ENCODE measurements at regions of chr5 and their contacts with region 1.

Region 1: DNA sequence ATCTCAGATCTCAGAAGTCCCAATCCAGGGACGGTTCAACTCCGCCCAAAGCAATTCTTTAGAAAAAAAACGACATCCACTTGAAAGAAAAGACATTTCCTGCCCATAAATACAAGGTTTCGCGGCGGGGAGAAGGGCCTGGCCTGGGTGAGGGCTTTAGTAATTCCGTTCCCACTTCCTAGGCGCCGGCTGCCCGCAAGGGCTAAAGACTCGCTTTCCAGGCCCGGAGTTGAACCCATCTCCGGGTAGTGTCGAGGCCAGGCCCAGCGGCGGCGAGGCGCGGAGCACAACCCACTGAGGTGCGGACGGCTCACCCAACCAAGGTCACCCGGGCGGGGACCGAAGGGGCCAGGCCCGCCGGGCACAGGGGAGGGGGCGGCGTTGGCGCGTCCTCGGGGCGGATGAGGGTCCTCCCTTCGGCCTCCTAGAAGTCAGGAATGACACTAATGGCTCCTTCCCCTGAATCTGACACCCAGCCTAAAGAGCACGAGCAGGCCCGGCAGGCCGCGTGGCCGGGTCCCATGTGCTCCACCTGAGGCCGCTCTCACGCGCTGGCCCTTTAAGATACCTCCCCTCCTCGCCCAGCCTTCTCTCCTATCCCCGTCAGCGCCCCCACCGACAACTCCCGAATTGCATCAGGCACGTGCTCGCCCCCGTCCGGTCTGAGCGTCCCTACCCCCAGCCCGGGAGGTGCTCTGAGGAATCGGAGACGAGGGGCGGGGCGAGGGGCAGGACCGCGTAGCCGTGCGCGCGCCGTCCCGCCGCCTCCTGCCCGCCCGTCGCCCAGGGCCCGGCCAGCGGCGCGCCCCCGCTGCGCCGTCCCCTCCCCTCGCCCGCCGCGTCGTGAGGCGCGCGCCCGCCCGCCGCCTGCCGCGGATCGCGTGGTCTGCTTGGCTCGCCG is 467 bp upstream of the LARP1 start:
- DNase-seq: peak; percentile 99
- ATAC-seq: peak; percentile 89
- H3K4me3 ChIP-seq: peak overlapping the region in 4 of 5 experiments; percentile 69 to 96 (median 85)
- H3K4me3 Mint-ChIP-seq: peak overlapping the region; percentile 90
- H3K27ac ChIP-seq: peak overlapping the region; percentile 80 to 97
- H3K27ac Mint-ChIP-seq: peak overlapping the region; percentile 91
- H3K4me1 ChIP-seq: peaks cover 28 to 29% of the 10 kb centered on the region in 2 donors
- H3K4me1 Mint-ChIP-seq: peaks cover 43% of the 10 kb centered on the region
- H3K27me3 ChIP-seq: no peaks in the 10 kb centered on the region
- H3K27me3 Mint-ChIP-seq: no peaks in the 10 kb centered on the region
- CTCF ChIP-seq: peak; percentile 45

Region 2: DNA sequence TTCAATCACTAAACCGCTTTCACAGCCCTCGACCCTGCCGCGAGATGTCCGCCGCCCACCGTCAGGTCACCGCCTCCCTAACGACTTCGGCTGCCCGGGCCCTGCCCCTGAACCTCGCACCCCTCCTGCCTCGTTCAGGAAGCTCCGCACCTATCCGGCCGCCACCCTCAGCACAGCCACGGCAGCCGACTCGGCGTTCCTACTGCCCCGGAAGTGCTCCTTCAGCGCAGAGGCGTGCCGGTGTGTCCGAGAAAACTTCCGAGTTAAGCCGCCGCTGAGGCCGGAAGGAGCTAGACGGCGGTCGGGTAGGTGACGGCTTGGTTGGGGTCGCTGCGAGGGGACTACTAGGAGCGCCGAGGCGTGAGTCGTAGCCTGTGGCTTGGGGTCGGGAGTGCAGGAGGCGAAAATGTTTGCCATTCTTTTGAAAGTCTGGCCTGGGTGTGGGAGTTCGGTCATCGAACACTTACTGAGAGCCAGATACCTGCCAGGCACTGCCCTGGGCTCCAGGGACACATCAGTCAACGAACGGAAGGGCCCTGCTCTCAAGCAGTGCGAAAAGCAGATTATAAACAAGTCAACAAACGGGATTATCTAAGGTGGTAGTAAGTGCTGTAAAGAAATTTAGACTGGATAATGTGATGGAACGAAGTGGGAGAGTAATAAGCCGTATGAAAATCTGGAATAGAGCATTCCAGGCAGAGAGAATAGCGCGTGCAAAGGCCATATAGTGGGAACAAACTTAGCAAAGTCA is 715.8 kb before region 1 on chr5 and contains the starts of genes FAM114A2 and MFAP3:
- CTCF ChIA-PET with region 1: no interaction called
- POLR2A ChIA-PET with region 1: no interaction called
- intact Hi-C with region 1: loop called (anchors 5 kb)
- DNase-seq: peak; percentile 90
- ATAC-seq: peak; percentile 98
- H3K4me3 ChIP-seq: peak within 1 kb of the TSS; percentile 77 to 94 (median 86)
- H3K4me3 Mint-ChIP-seq: peak within 1 kb of the TSS; percentile 99
- H3K27ac ChIP-seq: peak within 1 kb of the TSS; percentile 88 to 90
- H3K27ac Mint-ChIP-seq: peak within 1 kb of the TSS; percentile 99
- H3K4me1 ChIP-seq: peaks cover 13 to 16% of the 10 kb centered on the region in 2 donors
- H3K4me1 Mint-ChIP-seq: peaks cover 46% of the 10 kb centered on the region
- H3K27me3 ChIP-seq: no peaks in the 10 kb centered on the region
- H3K27me3 Mint-ChIP-seq: no peaks in the 10 kb centered on the region
- CTCF ChIP-seq: no peak
- total RNA-seq, gene FAM114A2: 34.2 and 36.2 TPM in 2 replicates
- total RNA-seq, gene MFAP3: 22.9 and 27.1 TPM in 2 replicates

Region 3: GRCh38 chr5:154534457-154535050 is 220.2 kb before region 1 on chr5:
- CTCF ChIA-PET with region 1: no interaction called
- POLR2A ChIA-PET with region 1: no interaction called
- intact Hi-C with region 1: no loop called
- DNase-seq: no peak
- ATAC-seq: no peak
- H3K4me3 ChIP-seq: no peak overlapping the region
- H3K4me3 Mint-ChIP-seq: no peak overlapping the region
- H3K27ac ChIP-seq: no peak overlapping the region
- H3K27ac Mint-ChIP-seq: no peak overlapping the region
- H3K4me1 ChIP-seq: no peaks in the 10 kb centered on the region
- H3K4me1 Mint-ChIP-seq: no peaks in the 10 kb centered on the region
- H3K27me3 ChIP-seq: peaks cover 0 to 9% (median 0%) of the 10 kb centered on the region in 4 experiments
- H3K27me3 Mint-ChIP-seq: peaks cover 35% of the 10 kb centered on the region
- CTCF ChIP-seq: no peak

Region 4: DNA sequence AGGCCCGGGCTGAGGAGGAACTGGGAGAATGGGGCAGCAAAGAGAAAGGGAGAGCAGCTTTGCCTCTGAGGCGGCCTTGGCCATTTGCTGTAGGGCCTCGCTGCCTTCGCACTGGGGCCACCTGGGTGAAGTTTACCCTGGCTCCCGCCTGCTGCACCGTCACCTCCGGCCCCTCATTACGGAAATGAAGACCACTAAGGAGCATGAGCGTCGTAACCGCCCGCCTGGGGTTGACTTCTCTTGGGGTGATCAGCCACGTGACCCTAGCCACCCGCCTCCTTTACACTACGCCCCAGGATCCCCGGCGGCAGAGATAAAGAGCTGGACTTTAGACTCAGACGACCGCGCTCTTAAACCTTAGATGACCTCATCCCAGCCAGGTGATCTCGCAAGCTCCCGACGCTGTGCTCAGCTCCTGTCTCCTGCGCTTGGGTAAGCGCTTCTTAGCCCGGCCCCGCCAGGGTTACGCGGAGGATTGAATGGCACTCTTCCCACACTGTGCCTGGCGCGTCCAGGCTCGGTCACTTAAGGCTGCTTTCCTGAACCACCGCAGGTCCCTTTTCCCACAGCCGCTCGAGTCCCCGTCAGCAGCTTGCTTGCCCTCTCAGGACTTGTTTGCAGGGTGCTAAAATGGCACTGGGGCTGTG is 107.5 kb before region 1 on chr5:
- CTCF ChIA-PET with region 1: interaction called, 4 read pairs
- POLR2A ChIA-PET with region 1: no interaction called
- intact Hi-C with region 1: loop called (anchors 2 kb)
- DNase-seq: peak; percentile 53
- ATAC-seq: peak; percentile 61
- H3K4me3 ChIP-seq: peak overlapping the region in 4 of 5 experiments; percentile 37 to 74 (median 57)
- H3K4me3 Mint-ChIP-seq: peak overlapping the region; percentile 93
- H3K27ac ChIP-seq: no peak overlapping the region
- H3K27ac Mint-ChIP-seq: peak overlapping the region; percentile 77
- H3K4me1 ChIP-seq: peaks cover 14 to 15% of the 10 kb centered on the region in 2 donors
- H3K4me1 Mint-ChIP-seq: peaks cover 15% of the 10 kb centered on the region
- H3K27me3 ChIP-seq: peaks cover 0 to 16% (median 2%) of the 10 kb centered on the region in 4 experiments
- H3K27me3 Mint-ChIP-seq: peaks cover 22% of the 10 kb centered on the region
- CTCF ChIP-seq: no peak

Region 5: DNA sequence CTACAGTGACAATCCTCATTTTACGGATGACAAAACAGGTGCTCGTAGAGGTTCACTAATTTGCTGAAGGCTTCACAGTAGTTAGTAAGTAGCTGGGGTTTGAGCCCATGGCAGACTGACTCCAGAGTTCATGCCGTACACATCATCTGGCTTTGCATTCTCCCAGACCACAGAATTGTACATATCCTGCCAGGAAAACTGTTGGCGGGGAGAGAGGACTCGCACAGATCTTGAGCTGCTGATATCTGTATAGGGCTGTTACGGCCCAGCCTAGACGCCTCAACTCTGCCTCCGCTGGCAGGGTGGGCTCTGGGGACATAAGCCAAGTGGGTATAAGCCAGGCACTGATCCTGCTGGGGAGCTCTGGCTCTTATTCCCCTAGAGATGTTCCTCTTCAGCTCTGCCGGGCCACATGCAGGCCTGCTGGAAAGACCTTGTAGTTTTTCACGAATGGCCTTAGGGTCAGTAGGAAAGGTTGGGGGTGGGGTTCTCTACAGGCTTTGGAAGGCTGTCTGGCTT is 16.7 kb after region 1 on chr5:
- CTCF ChIA-PET with region 1: interaction called, 4 read pairs
- POLR2A ChIA-PET with region 1: no interaction called
- intact Hi-C with region 1: loop called (anchors 2 kb)
- DNase-seq: no peak
- ATAC-seq: no peak
- H3K4me3 ChIP-seq: no peak overlapping the region
- H3K4me3 Mint-ChIP-seq: peak overlapping the region; percentile 60
- H3K27ac ChIP-seq: peak overlapping the region in 1 of 2 donors; percentile 90
- H3K27ac Mint-ChIP-seq: peak overlapping the region; percentile 82
- H3K4me1 ChIP-seq: peaks cover 69 to 71% of the 10 kb centered on the region in 2 donors
- H3K4me1 Mint-ChIP-seq: peaks cover 82% of the 10 kb centered on the region
- H3K27me3 ChIP-seq: no peaks in the 10 kb centered on the region
- H3K27me3 Mint-ChIP-seq: no peaks in the 10 kb centered on the region
- CTCF ChIP-seq: no peak

Region 6: GRCh38 chr5:154885439-154885838 is 130.7 kb after region 1 on chr5:
- CTCF ChIA-PET with region 1: no interaction called
- POLR2A ChIA-PET with region 1: no interaction called
- intact Hi-C with region 1: no loop called
- DNase-seq: no peak
- ATAC-seq: no peak
- H3K4me3 ChIP-seq: no peak overlapping the region
- H3K4me3 Mint-ChIP-seq: no peak overlapping the region
- H3K27ac ChIP-seq: no peak overlapping the region
- H3K27ac Mint-ChIP-seq: no peak overlapping the region
- H3K4me1 ChIP-seq: no peaks in the 10 kb centered on the region
- H3K4me1 Mint-ChIP-seq: no peaks in the 10 kb centered on the region
- H3K27me3 ChIP-seq: no peaks in the 10 kb centered on the region
- H3K27me3 Mint-ChIP-seq: no peaks in the 10 kb centered on the region
- CTCF ChIP-seq: no peak

Region 7: DNA sequence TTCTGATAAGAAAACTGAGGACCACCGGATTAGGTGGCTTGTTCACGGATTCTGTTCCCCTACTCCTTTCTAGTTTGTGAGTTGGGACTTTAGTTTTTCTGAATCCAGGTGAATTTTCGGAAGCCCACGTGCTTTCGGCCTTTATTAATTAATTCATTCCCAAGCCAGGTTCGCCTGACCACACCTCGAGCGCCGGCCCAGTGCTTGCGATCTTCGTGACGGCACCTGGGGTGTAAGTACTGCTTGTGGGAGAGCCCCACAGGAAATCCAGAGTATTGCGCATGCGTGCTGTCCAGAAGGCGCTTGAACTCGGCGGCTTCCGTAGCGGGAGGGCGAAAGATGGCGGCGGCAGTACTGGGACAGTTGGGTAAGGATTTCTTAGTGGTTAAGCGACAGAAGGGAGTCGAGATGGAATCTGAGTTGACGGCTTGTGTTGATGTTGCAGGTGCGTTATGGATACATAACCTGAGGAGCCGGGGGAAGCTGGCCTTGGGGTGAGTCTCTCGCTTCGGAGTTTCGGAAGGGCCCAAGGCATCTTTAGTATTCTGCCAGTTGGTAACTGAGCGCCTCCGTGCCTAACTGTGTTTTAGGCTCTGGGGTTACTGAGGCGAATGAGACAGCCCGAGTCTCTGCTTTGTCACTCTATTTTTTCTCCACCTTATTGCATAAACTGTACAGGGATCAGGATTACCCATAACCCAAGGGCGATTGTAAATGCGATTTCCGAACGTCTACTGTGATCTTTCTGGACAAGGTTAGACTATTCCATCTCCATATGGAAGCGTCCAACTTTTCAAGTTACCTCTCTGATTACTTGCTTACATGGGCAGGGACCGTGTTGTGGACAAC is 186.3 kb after region 1 on chr5 and contains the start of gene MRPL22:
- CTCF ChIA-PET with region 1: interaction called, 3 read pairs
- POLR2A ChIA-PET with region 1: no interaction called
- intact Hi-C with region 1: loop called (anchors 1 kb)
- DNase-seq: peak; percentile 97
- ATAC-seq: peak; percentile 67
- H3K4me3 ChIP-seq: peak within 1 kb of the TSS; percentile 57 to 94 (median 77)
- H3K4me3 Mint-ChIP-seq: peak within 1 kb of the TSS; percentile 99
- H3K27ac ChIP-seq: peak within 1 kb of the TSS; percentile 56 to 88
- H3K27ac Mint-ChIP-seq: peak within 1 kb of the TSS; percentile 93
- H3K4me1 ChIP-seq: peaks cover 27 to 32% of the 10 kb centered on the region in 2 donors
- H3K4me1 Mint-ChIP-seq: peaks cover 51% of the 10 kb centered on the region
- H3K27me3 ChIP-seq: no peaks in the 10 kb centered on the region
- H3K27me3 Mint-ChIP-seq: no peaks in the 10 kb centered on the region
- CTCF ChIP-seq: no peak
- total RNA-seq, gene MRPL22: 21.4 and 32.5 TPM in 2 replicates